A549 (cell line): ENCODE measurements at regions of chr7 and their contacts with region 1.

Region 1: GRCh38 chr7:6015917-6016652 is 7.0 kb downstream of the AIMP2 start:
- DNase-seq: no peak
- ATAC-seq: peak in 1 of 2 experiments; percentile 55; a peak in 2 of 6 replicates
- H3K4me3 ChIP-seq: no peak overlapping the region
- H3K27ac ChIP-seq: peak overlapping the region; percentile 75 to 83
- H3K4me1 ChIP-seq: peaks cover 29% of the 10 kb centered on the region; the same call in 2 of the 3 replicates
- CTCF ChIP-seq: no peak
- EP300 ChIP-seq: no peak
- POLR2A ChIP-seq: no peak
- RAD21 ChIP-seq: no peak

Region 2: GRCh38 chr7:6092953-6093354 is 76.9 kb after region 1 on chr7:
- CTCF ChIA-PET with region 1: no interaction called
- POLR2A ChIA-PET with region 1: interaction called, 12 read pairs
- DNase-seq: no peak
- ATAC-seq: peak in 1 of 2 experiments; percentile 48; a peak in 4 of 6 replicates
- H3K4me3 ChIP-seq: no peak overlapping the region
- H3K27ac ChIP-seq: peak overlapping the region in 1 of 2 experiments; percentile 4; a peak in 1 of 6 replicates
- H3K4me1 ChIP-seq: no peaks in the 10 kb centered on the region
- CTCF ChIP-seq: no peak
- EP300 ChIP-seq: no peak
- POLR2A ChIP-seq: no peak
- RAD21 ChIP-seq: no peak